ENCODE measurements at regions of chr6 and their contacts with region 1.

Region 1: DNA sequence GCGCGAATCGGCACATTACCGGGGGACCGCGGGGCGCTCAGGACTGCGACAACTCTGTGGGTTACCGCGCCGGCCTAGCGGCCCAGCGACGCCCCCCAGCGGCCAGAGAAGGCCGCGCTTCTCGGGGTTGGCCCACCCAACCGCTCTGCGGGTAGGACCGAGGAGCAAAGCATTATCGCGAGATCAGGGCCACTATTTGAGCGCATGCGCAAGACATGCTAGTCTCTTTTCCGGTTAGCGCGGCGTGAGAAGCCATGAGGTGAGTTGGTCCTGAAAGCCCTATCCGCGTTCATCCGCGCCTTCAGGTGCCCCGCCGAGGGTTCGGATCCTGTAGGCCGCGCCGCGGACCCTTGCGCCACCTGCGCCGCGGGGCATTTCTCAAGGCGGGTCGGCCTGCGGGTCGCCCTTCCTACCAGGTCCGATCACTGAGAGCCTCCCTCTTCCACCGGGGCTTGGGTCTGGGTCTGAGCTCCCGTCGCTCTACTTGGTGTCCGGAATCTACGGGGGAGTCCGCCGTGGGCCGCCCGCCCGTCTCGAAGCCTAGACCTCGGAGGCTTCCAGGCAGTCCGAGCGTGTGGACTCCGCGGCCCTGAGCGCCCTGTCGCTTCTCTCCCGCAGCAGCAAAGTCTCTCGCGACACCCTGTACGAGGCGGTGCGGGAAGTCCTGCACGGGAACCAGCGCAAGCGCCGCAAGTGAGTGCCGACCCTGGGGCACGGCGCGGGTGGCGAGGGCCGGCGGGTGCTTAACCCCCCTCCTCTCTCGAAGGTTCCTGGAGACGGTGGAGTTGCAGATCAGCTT is at the start of gene RPL10A:
- DNase-seq: peak; percentile 93 to 99 (median 96)
- ATAC-seq: peak; percentile 83 to 86
- H3K4me3 Mint-ChIP-seq: peak within 1 kb of the TSS; percentile 91 to 99 (median 98)
- H3K27ac Mint-ChIP-seq: peak within 1 kb of the TSS; percentile 90 to 99 (median 99)
- H3K4me1 Mint-ChIP-seq: peaks cover 18 to 43% (median 39%) of the 10 kb centered on the region in 4 donors
- H3K27me3 Mint-ChIP-seq: no peaks in the 10 kb centered on the region
- polyA plus RNA-seq, gene RPL10A: 1,376 to 1,445 (median 1,413) TPM

Region 2: GRCh38 chr6:35297601-35298481 is 170.5 kb before region 1 on chr6 and contains the start of gene DEF6:
- POLR2A ChIA-PET with region 1: interaction called, 47 read pairs
- DNase-seq: peak; percentile 76 to 93 (median 86)
- ATAC-seq: peak; percentile 82 to 87
- H3K4me3 Mint-ChIP-seq: peak within 1 kb of the TSS; percentile 82 to 98 (median 90)
- H3K27ac Mint-ChIP-seq: peak within 1 kb of the TSS; percentile 91 to 100 (median 97)
- H3K4me1 Mint-ChIP-seq: peaks cover 30 to 50% (median 47%) of the 10 kb centered on the region in 4 donors
- H3K27me3 Mint-ChIP-seq: no peaks in the 10 kb centered on the region
- polyA plus RNA-seq, gene DEF6: 93.7 to 196 (median 136) TPM

Region 3: GRCh38 chr6:35342258-35343091 is 125.9 kb before region 1 on chr6 and contains the start of gene PPARD:
- POLR2A ChIA-PET with region 1: interaction called, 33 read pairs
- DNase-seq: peak; percentile 93 to 99 (median 98)
- ATAC-seq: peak; percentile 94 to 97
- H3K4me3 Mint-ChIP-seq: peak within 1 kb of the TSS; percentile 89 to 99 (median 97)
- H3K27ac Mint-ChIP-seq: peak within 1 kb of the TSS; percentile 91 to 99 (median 95)
- H3K4me1 Mint-ChIP-seq: peaks cover 31 to 62% (median 53%) of the 10 kb centered on the region in 4 donors
- H3K27me3 Mint-ChIP-seq: no peaks in the 10 kb centered on the region
- polyA plus RNA-seq, gene PPARD: 1.9 to 14.3 (median 5.5) TPM

Region 4: DNA sequence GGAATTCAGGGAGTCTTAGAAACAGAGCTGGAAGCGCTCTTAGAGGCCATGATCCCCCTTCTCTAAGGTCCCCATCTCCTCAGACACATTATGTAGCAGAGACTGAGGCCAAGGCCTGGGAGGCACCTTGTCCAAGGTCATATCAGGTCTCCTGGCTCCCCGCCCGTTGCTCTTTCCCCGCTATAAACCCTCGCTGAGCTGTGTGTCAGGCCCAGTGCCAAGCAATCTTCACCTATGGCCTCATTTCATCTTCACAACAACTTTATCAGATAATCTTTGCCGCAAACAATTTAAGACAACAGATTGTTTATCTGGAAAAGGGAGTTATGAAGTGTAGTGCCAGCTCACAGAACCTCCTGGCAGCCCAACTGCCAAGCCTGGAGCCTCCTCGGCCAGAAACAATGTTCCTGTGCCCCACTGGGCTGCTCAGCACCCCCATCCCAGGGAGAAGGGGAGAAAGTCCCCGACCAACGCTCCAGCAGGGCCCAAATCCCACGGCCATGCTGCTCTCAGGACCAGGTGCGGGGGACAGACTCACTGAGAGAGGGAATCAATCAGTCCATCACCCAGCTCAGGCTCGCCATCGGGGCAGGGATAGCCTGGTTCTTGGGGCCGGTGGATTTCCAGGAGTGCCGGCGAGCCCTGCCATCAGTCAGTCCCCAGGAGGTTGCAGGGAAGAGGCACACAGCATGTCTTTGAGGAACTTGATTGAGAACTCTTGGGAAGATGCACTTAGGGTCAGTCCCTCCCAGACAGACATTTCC is 33.1 kb before region 1 on chr6:
- POLR2A ChIA-PET with region 1: no interaction called
- DNase-seq: no peak
- ATAC-seq: no peak
- H3K4me3 Mint-ChIP-seq: no peak overlapping the region
- H3K27ac Mint-ChIP-seq: peak overlapping the region in 2 of 10 donors; percentile 13 to 19
- H3K4me1 Mint-ChIP-seq: no peaks in the 10 kb centered on the region
- H3K27me3 Mint-ChIP-seq: no peaks in the 10 kb centered on the region

Region 5: GRCh38 chr6:35480169-35480568 is 11.8 kb after region 1 on chr6:
- POLR2A ChIA-PET with region 1: interaction called, 12 read pairs
- DNase-seq: no peak
- ATAC-seq: no peak
- H3K4me3 Mint-ChIP-seq: no peak overlapping the region
- H3K27ac Mint-ChIP-seq: peak overlapping the region in 1 of 10 donors; percentile 68
- H3K4me1 Mint-ChIP-seq: peaks cover 0 to 2% (median 0%) of the 10 kb centered on the region in 4 donors
- H3K27me3 Mint-ChIP-seq: no peaks in the 10 kb centered on the region

Region 6: GRCh38 chr6:35503534-35503933 is 35.2 kb after region 1 on chr6:
- POLR2A ChIA-PET with region 1: no interaction called
- DNase-seq: no peak
- ATAC-seq: no peak
- H3K4me3 Mint-ChIP-seq: no peak overlapping the region
- H3K27ac Mint-ChIP-seq: no peak overlapping the region
- H3K4me1 Mint-ChIP-seq: peaks cover 2 to 5% (median 4%) of the 10 kb centered on the region in 4 donors
- H3K27me3 Mint-ChIP-seq: peaks cover 9 to 35% (median 16%) of the 10 kb centered on the region in 5 donors

Region 7: GRCh38 chr6:35522660-35523658 is 54.6 kb after region 1 on chr6:
- POLR2A ChIA-PET with region 1: interaction called, 11 read pairs
- DNase-seq: peak; percentile 60 to 85 (median 76)
- ATAC-seq: peak; percentile 94
- H3K4me3 Mint-ChIP-seq: peak overlapping the region; percentile 50 to 79 (median 68)
- H3K27ac Mint-ChIP-seq: peak overlapping the region in 9 of 10 donors; percentile 54 to 94 (median 76)
- H3K4me1 Mint-ChIP-seq: peaks cover 2 to 26% (median 24%) of the 10 kb centered on the region in 4 donors
- H3K27me3 Mint-ChIP-seq: no peaks in the 10 kb centered on the region

Measured in naive thymus-derived CD8-positive, alpha-beta T cell (primary cell).